ENCODE measurements at regions of chr22 and their contacts with region 1.

Region 1: GRCh38 chr22:37561212-37562048 is 1.1 kb downstream of the CDC42EP1 start:
- DNase-seq: peak; percentile 95 to 99
- ATAC-seq: peak; percentile 87
- H3K4me3 ChIP-seq: peak overlapping the region; percentile 86 to 97
- H3K27ac ChIP-seq: peak overlapping the region; percentile 91 to 97
- H3K4me1 ChIP-seq: peaks cover 0 to 5% of the 10 kb centered on the region in 2 donors
- H3K27me3 ChIP-seq: no peaks in the 10 kb centered on the region

Region 2: DNA sequence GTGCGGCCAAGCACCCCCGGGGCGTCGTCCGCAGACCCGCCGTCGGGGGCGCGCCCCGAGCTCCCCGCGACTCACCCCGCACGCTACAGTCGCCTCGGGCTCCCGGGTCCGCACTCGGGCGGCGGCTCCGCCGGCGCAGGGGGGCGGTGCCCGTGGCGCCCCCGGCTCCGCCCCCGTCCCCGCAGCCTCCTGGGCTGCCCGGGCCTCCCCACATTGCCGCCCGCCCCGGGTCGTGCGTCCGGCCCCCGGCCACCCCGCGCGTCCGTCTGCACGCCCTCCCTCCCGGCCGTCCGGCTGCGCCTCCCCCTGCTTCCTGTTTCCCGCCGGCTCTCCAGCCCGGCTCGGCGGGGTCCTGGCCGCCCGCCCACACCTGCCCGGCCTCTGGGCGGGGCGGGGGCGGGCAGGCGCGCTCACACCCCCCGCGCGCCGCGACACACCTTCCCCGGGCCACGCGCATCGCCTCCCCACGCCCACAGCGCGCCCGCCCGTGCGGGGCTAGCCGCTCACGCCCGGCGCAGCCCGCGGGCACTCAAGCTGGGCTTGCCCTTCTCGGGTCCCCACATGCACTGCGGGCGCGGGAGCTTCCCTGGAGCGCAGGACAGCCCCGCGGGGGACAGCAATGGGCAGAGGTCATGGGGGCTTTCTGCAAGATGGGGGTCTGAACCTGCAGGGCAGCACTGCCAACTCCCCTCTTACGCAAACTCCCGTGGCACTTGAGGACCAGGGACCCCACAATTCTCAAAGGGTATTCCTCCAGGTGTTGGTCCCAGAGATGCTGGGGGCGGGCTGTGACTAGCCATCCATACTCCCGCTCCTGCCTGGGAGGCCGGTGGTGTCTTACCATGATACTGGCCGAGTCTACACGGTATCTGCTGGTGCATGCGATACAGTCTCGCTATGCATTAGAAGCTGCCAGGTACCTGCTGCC is 41.9 kb before region 1 on chr22 and contains the start of gene CARD10:
- intact Hi-C with region 1: no loop called
- DNase-seq: no peak
- ATAC-seq: peak; percentile 35
- H3K4me3 ChIP-seq: peak within 1 kb of the TSS; percentile 58 to 72
- H3K27ac ChIP-seq: no peak within 1 kb of the TSS
- H3K4me1 ChIP-seq: no peaks in the 10 kb centered on the region
- H3K27me3 ChIP-seq: no peaks in the 10 kb centered on the region
- total RNA-seq, gene CARD10: 10.1 to 24.9 TPM

Region 3: GRCh38 chr22:37545700-37546436 is 15.6 kb before region 1 on chr22:
- intact Hi-C with region 1: loop called (anchors 2 kb)
- DNase-seq: peak; percentile 95 to 96
- ATAC-seq: peak; percentile 90
- H3K4me3 ChIP-seq: no peak overlapping the region
- H3K27ac ChIP-seq: peak overlapping the region; percentile 94 to 97
- H3K4me1 ChIP-seq: no peaks in the 10 kb centered on the region
- H3K27me3 ChIP-seq: no peaks in the 10 kb centered on the region

Measured in aorta (tissue), 5 donors.